A549 (cell line): ENCODE measurements at regions of chr2 and their contacts with region 1.

Region 1: GRCh38 chr2:42974721-42975717 is 182.6 kb upstream of the HAAO start:
- DNase-seq: peak; percentile 58 to 64
- ATAC-seq: peak; percentile 60 to 86
- H3K4me3 ChIP-seq: peak overlapping the region; percentile 31
- H3K27ac ChIP-seq: peak overlapping the region; percentile 73 to 87
- H3K4me1 ChIP-seq: peaks cover 37% of the 10 kb centered on the region
- CTCF ChIP-seq: peak; percentile 94
- EP300 ChIP-seq: no peak
- POLR2A ChIP-seq: no peak
- RAD21 ChIP-seq: peak; percentile 99

Region 2: GRCh38 chr2:42743413-42743972 is 231.5 kb before region 1 on chr2:
- CTCF ChIA-PET with region 1: no interaction called
- POLR2A ChIA-PET with region 1: no interaction called
- DNase-seq: no peak
- ATAC-seq: peak in 1 of 2 experiments; percentile 30; a peak in 2 of 6 replicates
- H3K4me3 ChIP-seq: no peak overlapping the region
- H3K27ac ChIP-seq: no peak overlapping the region
- H3K4me1 ChIP-seq: no peaks in the 10 kb centered on the region
- CTCF ChIP-seq: no peak
- EP300 ChIP-seq: no peak
- POLR2A ChIP-seq: no peak
- RAD21 ChIP-seq: no peak

Region 3: DNA sequence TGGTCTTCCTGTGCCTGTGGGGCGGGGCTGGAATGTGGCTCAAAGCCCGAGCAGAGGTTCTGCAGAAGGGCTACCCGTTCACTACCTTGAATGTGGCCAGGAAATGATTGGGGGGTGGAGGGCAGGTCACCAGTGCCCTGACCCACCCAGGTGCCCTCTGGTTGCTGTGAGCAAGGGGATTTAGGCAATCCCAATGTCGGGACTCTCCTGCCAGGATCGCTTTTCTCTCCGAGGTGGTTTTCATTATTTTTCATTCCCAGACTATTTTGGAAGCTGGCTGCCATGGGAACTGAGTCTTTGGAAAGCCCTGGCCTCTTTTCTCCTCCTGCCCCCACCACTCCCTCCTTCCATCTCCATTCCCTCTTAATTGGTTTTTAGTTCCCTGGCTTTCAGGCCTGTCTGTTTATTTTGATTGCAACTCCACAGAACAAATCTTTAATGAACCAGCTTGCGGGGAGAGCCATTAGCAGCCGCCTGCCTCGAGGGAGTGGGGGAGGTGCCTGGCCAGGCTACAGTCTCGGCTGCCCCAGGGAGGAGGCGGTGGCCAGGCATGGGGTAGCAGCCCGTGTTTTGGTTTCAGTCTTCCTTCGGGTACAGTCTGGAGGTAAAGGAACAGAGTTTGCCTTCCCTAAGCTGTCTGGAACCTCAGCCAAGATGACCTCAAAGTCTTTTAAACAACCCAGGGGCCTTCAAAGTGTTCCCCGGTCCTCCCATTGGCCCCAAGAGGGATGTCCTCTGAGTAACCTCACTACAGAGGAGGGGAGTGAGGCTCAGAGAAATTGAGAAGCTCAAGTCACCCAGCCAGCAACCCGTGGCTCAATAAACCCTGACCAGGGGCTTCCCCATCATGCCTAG is 68.2 kb before region 1 on chr2:
- CTCF ChIA-PET with region 1: no interaction called
- POLR2A ChIA-PET with region 1: no interaction called
- DNase-seq: no peak
- ATAC-seq: peak in 1 of 2 experiments; percentile 65; a peak in 3 of 6 replicates
- H3K4me3 ChIP-seq: no peak overlapping the region
- H3K27ac ChIP-seq: peak overlapping the region in 1 of 2 experiments; percentile 61; a peak in 3 of 6 replicates
- H3K4me1 ChIP-seq: peaks cover 15% of the 10 kb centered on the region
- CTCF ChIP-seq: no peak
- EP300 ChIP-seq: no peak
- POLR2A ChIP-seq: no peak
- RAD21 ChIP-seq: no peak

Region 4: DNA sequence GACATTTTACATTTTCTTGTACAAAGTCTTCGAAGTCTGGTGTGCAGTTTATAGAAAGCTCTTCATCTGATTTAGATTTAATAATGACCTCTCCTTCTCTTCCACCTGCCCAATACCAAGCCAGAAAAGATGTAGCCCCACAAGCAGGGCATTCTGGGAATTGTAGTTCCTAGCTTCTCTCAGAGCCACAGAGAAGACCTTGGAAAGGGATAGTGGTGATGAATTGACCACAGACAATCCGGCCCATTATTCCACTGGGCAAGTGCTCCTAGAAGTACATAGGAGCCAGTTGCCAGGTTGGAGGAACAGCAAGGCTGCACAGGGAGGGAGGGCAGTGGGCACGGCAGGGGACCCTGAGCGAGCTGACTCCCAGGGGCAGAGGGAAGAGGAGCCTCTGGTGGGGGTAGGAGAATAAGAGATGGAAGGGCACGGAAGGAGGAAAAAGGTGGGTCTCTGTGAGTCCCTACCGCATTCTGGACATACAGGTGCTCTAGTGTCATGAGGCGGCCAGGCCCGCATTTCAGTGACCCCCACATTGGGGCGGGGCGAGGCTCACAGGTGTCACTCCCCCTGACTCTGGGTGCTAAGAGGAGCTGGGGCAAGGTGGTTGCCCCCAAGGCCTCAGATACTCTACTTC is 30.1 kb before region 1 on chr2:
- CTCF ChIA-PET with region 1: interaction called, 41 read pairs
- POLR2A ChIA-PET with region 1: no interaction called
- DNase-seq: peak; percentile 44 to 60
- ATAC-seq: peak; percentile 48 to 79; a peak in 4 of 6 replicates
- H3K4me3 ChIP-seq: no peak overlapping the region
- H3K27ac ChIP-seq: no peak overlapping the region
- H3K4me1 ChIP-seq: no peaks in the 10 kb centered on the region
- CTCF ChIP-seq: no peak
- EP300 ChIP-seq: no peak
- POLR2A ChIP-seq: no peak
- RAD21 ChIP-seq: no peak

Region 5: GRCh38 chr2:42964439-42965083 is 10.5 kb before region 1 on chr2:
- CTCF ChIA-PET with region 1: interaction called, 46 read pairs
- POLR2A ChIA-PET with region 1: no interaction called
- DNase-seq: no peak
- ATAC-seq: no peak
- H3K4me3 ChIP-seq: no peak overlapping the region
- H3K27ac ChIP-seq: no peak overlapping the region
- H3K4me1 ChIP-seq: peaks cover 3% of the 10 kb centered on the region; the same call in 2 of the 3 replicates
- CTCF ChIP-seq: no peak
- EP300 ChIP-seq: no peak
- POLR2A ChIP-seq: no peak
- RAD21 ChIP-seq: no peak

Region 6: GRCh38 chr2:43000242-43001054 is 25.4 kb after region 1 on chr2:
- CTCF ChIA-PET with region 1: interaction called, 12 read pairs
- POLR2A ChIA-PET with region 1: no interaction called
- DNase-seq: no peak
- ATAC-seq: peak; percentile 15 to 30; a peak in 2 of 6 replicates
- H3K4me3 ChIP-seq: no peak overlapping the region
- H3K27ac ChIP-seq: peak overlapping the region in 1 of 2 experiments; percentile 60; a peak in 3 of 6 replicates
- H3K4me1 ChIP-seq: peaks cover 18% of the 10 kb centered on the region
- CTCF ChIP-seq: no peak
- EP300 ChIP-seq: no peak
- POLR2A ChIP-seq: no peak
- RAD21 ChIP-seq: no peak

Region 7: DNA sequence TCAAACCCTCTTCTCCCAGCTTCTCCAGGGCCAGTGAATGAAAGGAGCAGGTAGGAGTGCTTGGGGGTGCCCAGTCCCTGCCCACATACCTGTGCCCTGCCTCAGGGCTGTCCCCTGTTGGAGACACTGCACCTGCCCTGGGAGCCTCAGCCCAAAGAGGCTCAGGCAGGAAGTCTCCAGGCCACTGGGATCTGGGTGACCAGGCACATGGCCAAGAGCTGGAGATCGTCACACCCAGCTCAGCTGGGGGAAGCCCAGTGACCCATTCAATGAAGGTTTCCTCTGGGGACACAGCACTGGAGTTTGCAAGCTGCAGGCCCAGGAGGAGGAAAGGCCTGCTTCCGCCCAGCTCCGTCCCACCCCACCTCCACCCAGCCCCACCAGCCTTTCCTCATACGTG is 95.0 kb after region 1 on chr2:
- CTCF ChIA-PET with region 1: interaction called, 11 read pairs
- POLR2A ChIA-PET with region 1: no interaction called
- DNase-seq: no peak
- ATAC-seq: no peak
- H3K4me3 ChIP-seq: no peak overlapping the region
- H3K27ac ChIP-seq: peak overlapping the region; percentile 11 to 59; a peak in 3 of 6 replicates
- H3K4me1 ChIP-seq: peaks cover 37% of the 10 kb centered on the region
- CTCF ChIP-seq: no peak
- EP300 ChIP-seq: no peak
- POLR2A ChIP-seq: no peak
- RAD21 ChIP-seq: no peak

Region 8: DNA sequence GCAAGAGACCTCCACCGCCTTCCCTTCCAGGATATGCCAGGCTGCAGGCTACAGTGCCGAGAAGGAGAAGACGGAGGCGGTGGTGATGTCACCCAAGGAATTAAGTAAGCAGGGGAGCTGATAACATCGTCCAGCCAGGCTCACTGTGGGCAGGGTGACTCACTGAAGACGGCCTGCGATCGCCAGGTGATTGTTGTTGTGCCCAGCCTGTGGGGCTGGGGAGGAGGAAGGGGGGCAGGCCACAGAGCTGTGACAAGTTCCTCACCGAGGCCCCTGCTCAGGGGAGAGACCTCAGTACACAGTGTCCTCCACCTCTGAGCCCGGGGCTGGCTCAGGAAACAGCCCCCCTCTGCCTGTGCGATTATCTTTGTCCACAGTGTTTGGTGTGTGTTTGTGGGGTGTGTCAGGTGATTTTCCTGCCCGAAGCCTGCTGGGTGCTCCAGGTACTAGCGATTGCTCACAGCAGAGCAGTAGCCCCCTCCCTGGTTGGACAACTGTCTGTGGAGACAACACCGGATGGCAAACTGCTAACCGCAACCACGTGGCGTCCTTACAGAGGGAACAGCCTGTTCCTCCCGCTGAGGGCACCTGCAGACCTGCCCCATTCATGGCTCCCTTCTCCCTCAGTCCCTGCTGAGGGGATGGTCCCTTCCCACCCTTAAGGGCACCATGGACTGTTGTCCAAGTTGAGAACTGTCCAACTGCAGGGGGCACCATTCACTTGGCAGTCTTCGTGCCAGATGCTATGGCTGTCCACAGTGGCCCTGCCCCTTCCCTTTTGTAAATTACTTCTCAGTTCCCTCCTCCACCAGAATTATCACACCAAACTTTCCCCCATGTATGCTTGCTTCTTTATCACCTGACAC is 156.2 kb after region 1 on chr2:
- CTCF ChIA-PET with region 1: interaction called, 22 read pairs
- POLR2A ChIA-PET with region 1: no interaction called
- DNase-seq: peak; percentile 87 to 96
- ATAC-seq: peak; percentile 86 to 87
- H3K4me3 ChIP-seq: no peak overlapping the region
- H3K27ac ChIP-seq: peak overlapping the region; percentile 75 to 86
- H3K4me1 ChIP-seq: peaks cover 31% of the 10 kb centered on the region
- CTCF ChIP-seq: peak; percentile 89
- EP300 ChIP-seq: peak in 1 of 2 experiments; percentile 12; a peak in 1 of 5 replicates
- POLR2A ChIP-seq: no peak
- RAD21 ChIP-seq: peak; percentile 94 to 96

Region 9: DNA sequence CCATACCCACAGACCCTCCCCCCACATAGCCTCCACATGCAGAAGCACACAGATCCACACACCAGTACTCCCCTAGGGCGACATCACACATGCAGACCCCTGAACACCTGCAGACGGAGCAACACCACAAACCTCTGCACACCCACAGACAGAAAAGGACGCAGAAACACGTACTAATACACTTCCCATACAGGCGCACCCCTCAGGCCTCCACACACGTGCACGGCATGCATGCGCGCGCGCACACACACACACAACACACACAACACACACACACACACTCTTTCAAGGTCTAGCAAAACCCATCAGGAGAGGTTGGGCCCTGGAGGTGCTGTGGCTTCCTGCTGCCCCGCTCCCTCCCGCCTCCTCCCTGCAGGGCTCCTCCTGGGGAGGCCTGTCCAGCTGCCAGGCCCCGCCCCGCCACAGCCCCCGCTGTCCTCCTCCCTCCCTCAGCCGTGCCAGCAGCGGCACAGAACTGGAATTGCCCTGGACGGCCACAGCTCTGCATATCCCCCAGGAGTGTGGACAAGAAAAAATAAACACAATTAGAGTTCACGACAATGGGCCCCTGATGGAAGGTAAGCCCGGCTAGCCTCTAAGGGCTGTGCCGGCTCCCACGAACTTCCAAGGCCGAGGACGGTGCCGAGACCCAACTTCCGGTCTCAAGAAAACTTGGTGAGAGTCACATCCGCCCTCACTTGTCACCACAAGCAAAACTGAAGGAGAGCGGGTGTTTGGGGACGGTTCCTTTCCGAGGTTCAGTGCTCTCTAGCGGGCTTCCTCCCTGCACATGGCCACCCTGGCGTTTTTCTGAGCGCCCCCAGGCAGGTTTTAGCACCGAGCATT is 244.6 kb after region 1 on chr2:
- CTCF ChIA-PET with region 1: interaction called, 163 read pairs
- POLR2A ChIA-PET with region 1: interaction called, 5 read pairs
- DNase-seq: peak; percentile 81 to 93
- ATAC-seq: peak; percentile 71 to 84
- H3K4me3 ChIP-seq: peak overlapping the region; percentile 44
- H3K27ac ChIP-seq: peak overlapping the region; percentile 89 to 95
- H3K4me1 ChIP-seq: peaks cover 52% of the 10 kb centered on the region
- CTCF ChIP-seq: no peak
- EP300 ChIP-seq: no peak
- POLR2A ChIP-seq: peak; percentile 48
- RAD21 ChIP-seq: peak; percentile 16 to 40; a peak in 3 of 5 replicates